Astrocyte of the cerebellum (primary cell): ENCODE measurements at regions of chr1 and their contacts with region 1.

Region 1: GRCh38 chr1:107244709-107245500 is 104.1 kb downstream of the NTNG1 start:
- DNase-seq: peak; percentile 42
- H3K4me3 ChIP-seq: no peak overlapping the region
- CTCF ChIP-seq: no peak

Region 2: GRCh38 chr1:107196973-107197562 is 47.8 kb before region 1 on chr1:
- in situ Hi-C with region 1: loop called (anchors 5 kb)
- DNase-seq: no peak
- H3K4me3 ChIP-seq: no peak overlapping the region
- CTCF ChIP-seq: peak; percentile 39